ENCODE measurements at regions of chr5 and their contacts with region 1.

Region 1: DNA sequence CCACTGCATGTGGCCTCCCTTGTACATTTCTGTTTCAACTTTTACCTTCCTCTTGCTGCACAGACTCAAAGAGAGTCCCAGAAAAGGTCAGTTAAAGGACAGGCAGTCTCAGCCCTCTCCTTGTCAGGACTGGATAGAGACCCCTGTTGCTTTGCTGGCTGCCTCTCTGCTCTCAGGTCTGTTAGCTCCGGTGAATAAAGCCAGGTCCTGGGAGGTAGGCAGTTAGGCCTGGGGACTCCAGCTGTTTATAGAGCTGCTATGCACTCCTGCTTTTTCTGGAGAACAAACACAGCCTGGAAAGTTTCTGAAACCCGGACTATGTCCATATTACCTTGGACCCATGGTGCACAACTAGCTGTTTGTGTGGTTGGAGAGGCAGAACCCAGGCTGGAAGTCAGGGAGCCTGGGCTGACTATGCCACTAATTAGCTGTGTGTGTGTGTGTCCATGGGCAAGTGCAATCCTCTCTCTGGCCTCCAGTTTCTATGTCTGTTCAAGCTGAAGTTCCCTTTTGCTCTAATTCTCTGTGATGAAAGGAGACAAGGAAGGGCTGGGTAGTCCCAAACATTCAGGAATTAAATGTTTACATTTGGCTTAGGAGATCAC is 42.9 kb downstream of the GLRA1 start:
- DNase-seq: no peak
- ATAC-seq: peak; percentile 53; the same call in 1 of the 2 replicates
- H3K4me3 ChIP-seq: no peak overlapping the region
- H3K27ac ChIP-seq: no peak overlapping the region
- H3K4me1 ChIP-seq: no peaks in the 10 kb centered on the region
- H3K27me3 ChIP-seq: no peaks in the 10 kb centered on the region; the same call in 1 of the 2 replicates
- CTCF ChIP-seq: no peak

Region 2: GRCh38 chr5:151811593-151812321 is 70.0 kb before region 1 on chr5:
- CTCF ChIA-PET with region 1: no interaction called
- POLR2A ChIA-PET with region 1: interaction called, 10 read pairs
- in situ Hi-C with region 1: no loop called
- intact Hi-C with region 1: no loop called
- DNase-seq: no peak
- ATAC-seq: no peak
- H3K4me3 ChIP-seq: no peak overlapping the region
- H3K27ac ChIP-seq: no peak overlapping the region
- H3K4me1 ChIP-seq: no peaks in the 10 kb centered on the region
- H3K27me3 ChIP-seq: no peaks in the 10 kb centered on the region
- CTCF ChIP-seq: no peak

Region 3: DNA sequence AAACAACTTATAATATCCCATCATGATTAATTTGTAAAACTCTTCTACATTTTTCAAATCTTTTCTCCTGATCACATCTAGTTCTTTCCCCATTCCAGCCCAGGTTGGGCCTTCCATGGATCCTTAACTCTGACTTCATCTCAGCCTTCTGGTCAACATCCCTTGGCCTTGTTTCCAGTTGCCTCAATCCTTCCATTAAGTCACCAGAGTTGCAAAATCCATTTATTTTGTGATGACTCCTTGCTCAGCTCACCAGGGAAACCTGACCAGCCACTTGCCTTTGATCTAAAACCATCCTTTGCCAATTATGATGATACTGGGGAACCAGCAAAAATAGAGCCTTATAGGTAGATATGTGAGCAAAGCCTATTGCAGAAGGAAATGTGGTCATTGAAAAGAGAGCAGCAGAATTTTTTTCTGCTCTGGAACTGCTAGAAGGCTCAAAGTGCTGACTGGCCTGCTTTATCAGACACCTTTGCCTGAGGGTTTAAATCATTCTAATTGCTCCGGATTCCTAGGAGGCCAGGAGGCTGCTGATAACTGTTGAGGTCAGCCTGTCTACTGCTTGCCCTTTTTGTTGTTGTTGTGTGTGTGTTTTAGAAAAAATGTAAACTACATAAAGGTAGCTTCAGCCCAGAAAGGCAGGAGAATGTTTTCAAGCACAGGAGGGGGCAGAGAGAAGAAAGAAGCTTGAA is 1096.6 kb after region 1 on chr5:
- CTCF ChIA-PET with region 1: no interaction called
- POLR2A ChIA-PET with region 1: no interaction called
- in situ Hi-C with region 1: no loop called
- intact Hi-C with region 1: no loop called
- DNase-seq: no peak
- ATAC-seq: no peak
- H3K4me3 ChIP-seq: no peak overlapping the region
- H3K27ac ChIP-seq: no peak overlapping the region
- H3K4me1 ChIP-seq: no peaks in the 10 kb centered on the region
- H3K27me3 ChIP-seq: no peaks in the 10 kb centered on the region
- CTCF ChIP-seq: no peak

Measured in Panc1 (cell line).